IMR-90 (cell line): ENCODE measurements at regions of chr18 and their contacts with region 1.

Region 1: GRCh38 chr18:70288851-70289328 is at the start of gene SOCS6:
- DNase-seq: peak; percentile 66
- ATAC-seq: peak; percentile 83
- H3K4me3 ChIP-seq: peak within 1 kb of the TSS; percentile 53
- H3K27ac ChIP-seq: peak within 1 kb of the TSS; percentile 79
- H3K4me1 ChIP-seq: peaks cover 11% of the 10 kb centered on the region
- H3K27me3 ChIP-seq: no peaks in the 10 kb centered on the region
- CTCF ChIP-seq: no peak
- POLR2A ChIP-seq: peak; percentile 85
- RAD21 ChIP-seq: no peak
- total RNA-seq, gene SOCS6: 53.9 and 57.4 TPM in 2 replicates

Region 2: GRCh38 chr18:69518989-69519388 is 769.9 kb before region 1 on chr18:
- CTCF ChIA-PET with region 1: no interaction called
- POLR2A ChIA-PET with region 1: no interaction called
- dilution Hi-C with region 1: no loop called
- in situ Hi-C with region 1: no loop called
- intact Hi-C with region 1: no loop called
- DNase-seq: peak; percentile 10
- ATAC-seq: no peak
- H3K4me3 ChIP-seq: no peak overlapping the region
- H3K27ac ChIP-seq: no peak overlapping the region
- H3K4me1 ChIP-seq: 0 out of 2 replicates have a peak, but pooled peaks cover 2% of the 10 kb centered on the region
- H3K27me3 ChIP-seq: no peaks in the 10 kb centered on the region
- CTCF ChIP-seq: no peak
- POLR2A ChIP-seq: no peak
- RAD21 ChIP-seq: no peak

Region 3: DNA sequence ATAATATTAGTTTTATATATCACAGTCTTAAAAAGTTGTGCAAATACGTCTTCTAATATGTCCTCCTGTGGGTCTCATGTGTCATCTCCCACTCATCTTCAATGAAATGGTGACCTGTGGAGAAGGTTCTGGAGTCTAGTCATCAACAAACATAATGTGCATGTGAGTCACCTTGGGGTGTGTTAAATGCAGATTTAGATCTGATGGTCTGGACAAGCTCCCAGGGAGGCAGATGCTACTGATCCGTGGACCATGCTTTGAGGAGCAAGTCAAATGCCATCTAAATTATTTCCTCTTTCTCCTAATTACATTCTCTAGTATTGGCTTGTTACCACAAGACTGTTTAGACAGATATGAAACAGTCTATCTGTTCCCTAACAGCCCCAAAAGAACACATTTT is 552.2 kb before region 1 on chr18:
- CTCF ChIA-PET with region 1: no interaction called
- POLR2A ChIA-PET with region 1: no interaction called
- dilution Hi-C with region 1: no loop called
- in situ Hi-C with region 1: no loop called
- intact Hi-C with region 1: no loop called
- DNase-seq: peak; percentile 9
- ATAC-seq: no peak
- H3K4me3 ChIP-seq: no peak overlapping the region
- H3K27ac ChIP-seq: no peak overlapping the region
- H3K4me1 ChIP-seq: no peaks in the 10 kb centered on the region
- H3K27me3 ChIP-seq: no peaks in the 10 kb centered on the region
- CTCF ChIP-seq: no peak
- POLR2A ChIP-seq: no peak
- RAD21 ChIP-seq: no peak

Region 4: DNA sequence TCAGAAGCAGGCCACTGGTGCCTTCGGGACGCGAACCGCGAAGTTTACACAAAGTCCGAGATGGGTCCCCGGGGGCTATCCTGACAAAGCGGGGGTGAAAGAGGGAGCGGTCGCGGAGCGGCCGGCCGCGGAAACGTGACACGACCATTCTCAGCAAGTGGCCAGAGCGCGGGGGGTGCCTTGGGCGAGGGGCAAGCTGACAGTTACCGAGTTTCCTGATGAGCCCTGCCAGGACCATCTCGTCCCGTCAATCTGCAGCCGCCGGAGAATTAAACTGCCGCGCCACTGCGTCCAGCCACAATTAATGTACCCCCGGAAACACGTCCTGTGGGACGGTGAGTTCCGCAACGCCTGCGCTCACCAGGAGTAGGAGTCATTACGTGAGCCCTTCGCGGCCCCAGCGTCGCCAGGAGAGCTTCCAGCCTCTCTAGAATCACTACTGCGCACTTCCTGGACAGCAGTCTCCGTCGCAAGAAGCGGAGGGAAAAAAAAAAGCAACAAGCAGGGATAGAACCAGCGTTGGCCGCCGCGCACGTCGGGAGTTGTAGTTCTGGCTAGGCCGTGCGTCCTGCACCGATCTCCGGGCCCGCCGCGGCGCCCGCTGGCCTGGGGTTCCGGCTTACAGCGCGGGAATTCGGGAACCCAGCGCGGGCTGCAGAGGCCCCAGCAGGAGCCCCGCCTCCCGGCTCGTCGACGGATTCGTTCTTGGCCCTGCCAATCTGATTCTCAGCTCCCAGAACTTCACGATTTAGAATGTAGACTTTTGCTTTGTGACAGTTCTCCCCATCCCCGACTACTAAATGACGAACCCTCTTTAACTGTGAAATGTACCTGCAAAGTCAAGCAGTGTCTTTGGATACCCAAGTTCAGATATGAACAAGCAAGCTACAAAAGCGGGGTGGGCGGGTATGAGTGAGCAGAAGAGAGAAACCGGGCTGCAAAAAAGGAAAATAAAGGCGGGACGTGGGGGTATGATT is 83.2 kb before region 1 on chr18 and contains the start of gene RTTN:
- CTCF ChIA-PET with region 1: no interaction called
- POLR2A ChIA-PET with region 1: no interaction called
- dilution Hi-C with region 1: no loop called
- in situ Hi-C with region 1: loop called (anchors 5 kb)
- intact Hi-C with region 1: loop called (anchors 2 kb)
- DNase-seq: peak; percentile 94
- ATAC-seq: peak; percentile 99
- H3K4me3 ChIP-seq: peak within 1 kb of the TSS; percentile 91
- H3K27ac ChIP-seq: peak within 1 kb of the TSS; percentile 98
- H3K4me1 ChIP-seq: no peaks in the 10 kb centered on the region
- H3K27me3 ChIP-seq: no peaks in the 10 kb centered on the region
- CTCF ChIP-seq: no peak
- POLR2A ChIP-seq: no peak
- RAD21 ChIP-seq: peak; percentile 18
- total RNA-seq, gene RTTN: 19.9 and 21.9 TPM in 2 replicates